H1 (cell line): ENCODE measurements at regions of chr10 and their contacts with region 1.

Region 1: GRCh38 chr10:63866075-63866746 is 345.0 kb downstream of the REEP3 start:
- DNase-seq: peak; percentile 64 to 88
- H3K4me3 ChIP-seq: peak overlapping the region; percentile 3 to 49 (median 25); a peak in 5 of 8 replicates
- H3K27ac ChIP-seq: no peak overlapping the region
- H3K4me1 ChIP-seq: peaks cover 0 to 3% (median 2%) of the 10 kb centered on the region in 4 experiments; a peak in 4 of 7 replicates
- H3K27me3 ChIP-seq: no peaks in the 10 kb centered on the region
- CTCF ChIP-seq: peak; percentile 64 to 93 (median 82)
- EP300 ChIP-seq: no peak
- POLR2A ChIP-seq: no peak
- RAD21 ChIP-seq: peak; percentile 82 to 88

Region 2: GRCh38 chr10:63812501-63812900 is 53.7 kb before region 1 on chr10:
- CTCF ChIA-PET with region 1: no interaction called
- POLR2A ChIA-PET with region 1: no interaction called
- DNase-seq: no peak
- H3K4me3 ChIP-seq: no peak overlapping the region
- H3K27ac ChIP-seq: no peak overlapping the region
- H3K4me1 ChIP-seq: no peaks in the 10 kb centered on the region
- H3K27me3 ChIP-seq: no peaks in the 10 kb centered on the region
- CTCF ChIP-seq: no peak
- EP300 ChIP-seq: no peak
- POLR2A ChIP-seq: no peak
- RAD21 ChIP-seq: no peak

Region 3: DNA sequence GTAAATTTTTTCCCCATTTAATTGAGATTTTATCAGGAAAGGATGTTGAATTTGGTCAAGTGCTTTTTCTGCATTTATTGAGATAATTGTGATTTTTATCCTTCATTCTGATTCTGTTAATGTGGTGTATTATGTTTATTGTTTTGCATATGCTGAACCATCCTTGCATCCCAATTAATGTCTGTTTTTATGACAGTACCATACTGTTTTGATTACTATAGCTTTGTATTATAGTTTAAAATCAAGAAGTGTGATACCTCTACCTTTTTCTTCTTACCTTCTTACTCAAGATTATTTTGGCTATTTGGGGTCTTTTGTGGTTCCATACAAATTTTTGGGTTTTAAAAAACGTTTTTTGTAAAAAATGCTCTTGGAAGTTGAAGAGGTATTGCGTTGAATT is 12.2 kb after region 1 on chr10:
- CTCF ChIA-PET with region 1: interaction called, 56 read pairs
- POLR2A ChIA-PET with region 1: no interaction called
- DNase-seq: no peak
- H3K4me3 ChIP-seq: no peak overlapping the region
- H3K27ac ChIP-seq: no peak overlapping the region
- H3K4me1 ChIP-seq: peaks cover 0 to 3% (median under 1%) of the 10 kb centered on the region in 4 experiments; a peak in 3 of 7 replicates
- H3K27me3 ChIP-seq: no peaks in the 10 kb centered on the region
- CTCF ChIP-seq: no peak
- EP300 ChIP-seq: no peak
- POLR2A ChIP-seq: no peak
- RAD21 ChIP-seq: no peak

Region 4: GRCh38 chr10:63887023-63887589 is 20.9 kb after region 1 on chr10:
- CTCF ChIA-PET with region 1: interaction called, 56 read pairs
- POLR2A ChIA-PET with region 1: no interaction called
- DNase-seq: peak; percentile 61 to 79
- H3K4me3 ChIP-seq: no peak overlapping the region
- H3K27ac ChIP-seq: no peak overlapping the region
- H3K4me1 ChIP-seq: peaks cover 0 to 5% (median 4%) of the 10 kb centered on the region in 4 experiments; a peak in 4 of 7 replicates
- H3K27me3 ChIP-seq: no peaks in the 10 kb centered on the region
- CTCF ChIP-seq: peak; percentile 82 to 85 (median 83)
- EP300 ChIP-seq: no peak
- POLR2A ChIP-seq: no peak
- RAD21 ChIP-seq: peak; percentile 67 to 73

Region 5: GRCh38 chr10:63965846-63966245 is 99.6 kb after region 1 on chr10:
- CTCF ChIA-PET with region 1: interaction called, 256 read pairs
- POLR2A ChIA-PET with region 1: no interaction called
- DNase-seq: no peak
- H3K4me3 ChIP-seq: no peak overlapping the region
- H3K27ac ChIP-seq: no peak overlapping the region
- H3K4me1 ChIP-seq: no peaks in the 10 kb centered on the region
- H3K27me3 ChIP-seq: no peaks in the 10 kb centered on the region
- CTCF ChIP-seq: no peak
- EP300 ChIP-seq: no peak
- POLR2A ChIP-seq: no peak
- RAD21 ChIP-seq: no peak